ENCODE measurements at regions of chr2 and their contacts with region 1.

Region 1: GRCh38 chr2:99112617-99113016 is 28.9 kb upstream of the C2orf15 start:
- DNase-seq: no peak
- H3K4me3 ChIP-seq: no peak overlapping the region
- H3K27ac ChIP-seq: no peak overlapping the region
- H3K4me1 ChIP-seq: no peaks in the 10 kb centered on the region
- H3K27me3 ChIP-seq: no peaks in the 10 kb centered on the region
- CTCF ChIP-seq: no peak

Region 2: DNA sequence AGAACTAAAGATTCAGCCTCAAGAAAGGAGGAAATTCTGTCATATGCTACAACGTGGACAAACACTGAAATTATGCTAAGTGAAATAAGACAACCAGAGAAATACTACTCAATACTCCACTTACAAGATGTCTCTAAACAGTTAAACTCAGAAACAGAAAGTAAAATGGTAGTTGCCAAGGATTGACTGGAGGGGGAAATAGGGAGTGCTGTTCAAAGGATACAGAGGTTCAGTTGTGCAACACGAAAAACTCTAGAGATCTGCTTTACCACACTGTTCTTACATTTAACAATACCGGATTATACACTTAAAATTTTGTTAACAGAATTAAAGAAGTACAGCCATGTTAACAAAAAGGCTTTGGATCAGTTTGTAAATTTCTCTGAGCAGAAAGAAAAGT is 10.9 kb before region 1 on chr2:
- CTCF ChIA-PET with region 1: no interaction called
- POLR2A ChIA-PET with region 1: interaction called, 12 read pairs
- intact Hi-C with region 1: no loop called
- DNase-seq: no peak
- H3K4me3 ChIP-seq: no peak overlapping the region
- H3K27ac ChIP-seq: no peak overlapping the region
- H3K4me1 ChIP-seq: no peaks in the 10 kb centered on the region
- H3K27me3 ChIP-seq: no peaks in the 10 kb centered on the region
- CTCF ChIP-seq: no peak